ENCODE measurements at regions of chr10 and their contacts with region 1.

Region 1: GRCh38 chr10:69716711-69717560 is 84.8 kb upstream of the COL13A1 start:
- DNase-seq: peak; percentile 89
- H3K4me3 Mint-ChIP-seq: no peak overlapping the region
- H3K27ac Mint-ChIP-seq: no peak overlapping the region
- H3K4me1 Mint-ChIP-seq: no peaks in the 10 kb centered on the region
- H3K27me3 Mint-ChIP-seq: peaks cover 25% of the 10 kb centered on the region
- CTCF ChIP-seq: peak; percentile 91

Region 2: DNA sequence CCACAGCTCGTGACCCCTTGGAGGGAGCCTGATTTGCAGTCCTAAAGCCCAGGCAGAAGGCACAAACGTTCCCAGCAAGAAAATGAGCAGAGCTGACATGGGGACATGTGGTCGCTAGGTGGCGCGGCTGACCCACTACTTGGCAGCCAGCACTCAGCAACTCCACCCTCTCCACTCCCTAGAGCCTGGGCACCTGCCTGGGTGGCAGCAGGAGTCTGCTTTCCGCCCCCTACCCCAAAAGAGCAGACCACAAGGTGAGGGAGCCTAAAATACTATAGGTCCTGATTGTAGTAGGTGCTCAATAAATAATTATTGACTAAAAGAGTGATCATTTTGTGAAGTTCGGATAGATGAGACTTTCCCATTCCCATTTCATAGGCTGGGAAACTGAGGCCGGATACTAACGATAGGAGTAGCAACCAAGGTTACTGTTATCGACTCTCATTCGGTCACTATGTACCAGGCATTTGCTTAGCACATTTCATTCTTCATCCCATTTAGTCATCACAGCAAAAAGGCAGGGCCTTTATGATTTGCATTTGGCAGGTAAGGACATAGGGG is 201.2 kb before region 1 on chr10:
- CTCF ChIA-PET with region 1: no interaction called
- intact Hi-C with region 1: loop called (anchors 5 kb)
- DNase-seq: peak; percentile 86
- H3K4me3 Mint-ChIP-seq: no peak overlapping the region
- H3K27ac Mint-ChIP-seq: peak overlapping the region; percentile 31
- H3K4me1 Mint-ChIP-seq: peaks cover 10% of the 10 kb centered on the region
- H3K27me3 Mint-ChIP-seq: no peaks in the 10 kb centered on the region
- CTCF ChIP-seq: peak; percentile 89

Region 3: GRCh38 chr10:69644658-69645295 is 72.2 kb before region 1 on chr10:
- CTCF ChIA-PET with region 1: interaction called, 20 read pairs
- intact Hi-C with region 1: loop called (anchors 1 kb)
- DNase-seq: peak; percentile 85
- H3K4me3 Mint-ChIP-seq: no peak overlapping the region
- H3K27ac Mint-ChIP-seq: no peak overlapping the region
- H3K4me1 Mint-ChIP-seq: no peaks in the 10 kb centered on the region
- H3K27me3 Mint-ChIP-seq: peaks cover 18% of the 10 kb centered on the region
- CTCF ChIP-seq: peak; percentile 90

Region 4: DNA sequence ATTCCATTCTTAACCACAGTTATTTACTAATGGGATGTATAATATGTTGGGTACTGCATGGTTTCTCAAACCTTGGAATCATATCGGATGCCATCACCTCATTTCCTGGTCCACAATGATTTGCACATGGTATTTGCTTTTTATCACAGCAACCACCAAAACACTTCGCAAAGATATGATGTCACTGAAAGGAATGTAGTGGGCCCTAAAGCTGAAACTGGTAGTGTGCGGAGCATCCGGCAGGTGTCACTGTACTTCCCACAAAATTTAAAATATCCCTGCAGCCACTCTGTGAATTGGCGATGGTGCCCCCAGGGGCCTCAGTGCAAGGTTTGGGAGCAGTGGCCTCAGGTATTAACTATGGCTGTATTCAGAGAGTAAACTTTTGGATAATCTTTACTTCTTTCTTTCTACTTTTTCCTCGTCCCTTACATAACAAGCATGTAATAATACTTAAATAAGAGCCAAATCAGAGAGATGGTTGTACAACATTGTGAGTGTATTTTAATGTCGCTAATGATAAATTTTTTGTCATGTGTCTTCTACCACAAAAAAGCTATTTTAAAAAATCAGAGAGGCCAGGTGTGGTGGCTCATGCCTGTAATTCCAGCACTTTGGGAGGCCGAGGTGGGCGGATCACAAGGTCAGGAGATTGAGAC is 20.7 kb before region 1 on chr10:
- CTCF ChIA-PET with region 1: interaction called, 16 read pairs
- intact Hi-C with region 1: loop called (anchors 2 kb)
- DNase-seq: peak; percentile 78
- H3K4me3 Mint-ChIP-seq: no peak overlapping the region
- H3K27ac Mint-ChIP-seq: peak overlapping the region; percentile 53
- H3K4me1 Mint-ChIP-seq: peaks cover 12% of the 10 kb centered on the region
- H3K27me3 Mint-ChIP-seq: peaks cover 28% of the 10 kb centered on the region
- CTCF ChIP-seq: peak; percentile 80

Region 5: DNA sequence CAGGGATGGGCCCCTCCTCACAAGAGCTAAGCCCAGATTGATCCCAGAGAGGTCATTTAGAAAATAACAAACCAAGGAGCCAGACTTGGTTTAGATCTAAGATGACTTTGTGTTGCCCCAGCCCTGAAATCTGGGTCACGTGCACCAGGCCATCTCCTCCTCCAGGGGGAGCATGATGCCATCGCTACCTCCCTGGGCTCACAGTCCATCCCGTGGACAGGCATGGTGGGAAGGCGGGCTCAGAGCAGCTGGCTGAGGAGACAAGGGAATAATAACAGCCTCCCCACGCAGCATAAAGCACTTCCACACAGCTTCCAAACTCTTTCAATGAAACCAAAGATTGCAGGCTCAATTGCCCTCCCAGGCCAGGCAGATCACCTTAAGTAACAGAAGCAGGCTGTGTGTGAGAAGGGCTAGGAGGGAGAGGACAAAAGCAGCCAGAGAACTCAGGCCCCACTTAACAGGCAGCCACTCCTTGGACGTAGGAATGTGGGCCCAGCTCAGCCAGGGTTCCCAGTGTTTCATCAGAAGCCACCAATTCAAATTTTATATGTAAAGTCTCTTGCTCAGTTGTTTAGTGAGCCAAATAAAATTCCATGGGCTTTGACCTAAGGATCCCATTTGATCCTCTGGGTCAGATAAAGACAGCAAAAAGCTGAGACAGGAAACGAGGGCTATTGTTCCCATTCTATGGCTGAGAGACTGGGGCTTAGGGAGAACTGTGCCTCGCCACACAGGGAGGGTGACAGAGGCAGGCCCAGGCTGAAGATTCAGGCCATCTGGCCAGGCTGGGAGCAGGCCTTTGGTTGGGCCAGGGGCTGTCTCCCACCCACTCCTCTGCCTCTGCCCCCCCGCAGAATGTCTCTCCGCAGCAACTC is 184.9 kb after region 1 on chr10:
- CTCF ChIA-PET with region 1: no interaction called
- intact Hi-C with region 1: no loop called
- DNase-seq: peak; percentile 65
- H3K4me3 Mint-ChIP-seq: no peak overlapping the region
- H3K27ac Mint-ChIP-seq: no peak overlapping the region
- H3K4me1 Mint-ChIP-seq: peaks cover 7% of the 10 kb centered on the region
- H3K27me3 Mint-ChIP-seq: peaks cover 40% of the 10 kb centered on the region
- CTCF ChIP-seq: peak; percentile 59

Region 6: DNA sequence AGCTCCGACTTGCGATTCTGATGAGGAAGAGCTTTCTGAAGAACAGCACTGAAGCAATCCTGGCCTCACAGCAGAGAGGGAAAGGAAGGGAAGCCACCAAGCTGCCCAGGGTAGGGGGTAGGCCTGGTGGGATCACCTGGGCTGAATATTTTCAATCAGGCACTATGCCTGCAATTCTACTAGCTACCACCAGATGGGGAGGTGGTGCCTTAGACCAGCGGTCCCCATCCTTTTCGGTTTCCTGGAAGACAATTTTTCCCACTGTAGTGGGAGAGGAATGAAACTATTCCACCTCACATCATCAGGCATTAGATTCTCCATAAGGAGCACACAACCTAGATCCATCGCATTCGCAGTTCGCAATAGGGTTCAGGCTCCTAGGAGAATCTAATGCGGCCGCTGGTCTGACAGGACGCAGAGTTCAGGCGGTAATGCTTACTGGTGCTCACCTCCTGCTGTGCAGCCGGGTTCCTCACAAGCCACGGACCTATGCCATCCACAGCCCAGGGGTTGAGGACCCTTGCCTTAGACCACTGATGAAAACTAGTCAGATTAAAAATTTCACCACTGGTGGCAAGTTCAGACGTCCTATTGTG is 662.7 kb after region 1 on chr10:
- CTCF ChIA-PET with region 1: no interaction called
- intact Hi-C with region 1: no loop called
- DNase-seq: no peak
- H3K4me3 Mint-ChIP-seq: no peak overlapping the region
- H3K27ac Mint-ChIP-seq: no peak overlapping the region
- H3K4me1 Mint-ChIP-seq: peaks cover 17% of the 10 kb centered on the region
- H3K27me3 Mint-ChIP-seq: peaks cover 8% of the 10 kb centered on the region
- CTCF ChIP-seq: peak; percentile 66